B cell (primary cell): ENCODE measurements at regions of chr12 and their contacts with region 1.

Region 1: GRCh38 chr12:92259852-92260251 is 114.2 kb upstream of the BTG1 start:
- DNase-seq: no peak
- ATAC-seq: no peak
- H3K4me3 ChIP-seq: no peak overlapping the region
- H3K4me3 Mint-ChIP-seq: no peak overlapping the region
- H3K27ac ChIP-seq: no peak overlapping the region
- H3K27ac Mint-ChIP-seq: no peak overlapping the region
- H3K4me1 ChIP-seq: peaks cover 6 to 10% of the 10 kb centered on the region in 2 donors
- H3K4me1 Mint-ChIP-seq: peaks cover 27% of the 10 kb centered on the region
- H3K27me3 ChIP-seq: no peaks in the 10 kb centered on the region
- H3K27me3 Mint-ChIP-seq: no peaks in the 10 kb centered on the region
- CTCF ChIP-seq: no peak

Region 2: DNA sequence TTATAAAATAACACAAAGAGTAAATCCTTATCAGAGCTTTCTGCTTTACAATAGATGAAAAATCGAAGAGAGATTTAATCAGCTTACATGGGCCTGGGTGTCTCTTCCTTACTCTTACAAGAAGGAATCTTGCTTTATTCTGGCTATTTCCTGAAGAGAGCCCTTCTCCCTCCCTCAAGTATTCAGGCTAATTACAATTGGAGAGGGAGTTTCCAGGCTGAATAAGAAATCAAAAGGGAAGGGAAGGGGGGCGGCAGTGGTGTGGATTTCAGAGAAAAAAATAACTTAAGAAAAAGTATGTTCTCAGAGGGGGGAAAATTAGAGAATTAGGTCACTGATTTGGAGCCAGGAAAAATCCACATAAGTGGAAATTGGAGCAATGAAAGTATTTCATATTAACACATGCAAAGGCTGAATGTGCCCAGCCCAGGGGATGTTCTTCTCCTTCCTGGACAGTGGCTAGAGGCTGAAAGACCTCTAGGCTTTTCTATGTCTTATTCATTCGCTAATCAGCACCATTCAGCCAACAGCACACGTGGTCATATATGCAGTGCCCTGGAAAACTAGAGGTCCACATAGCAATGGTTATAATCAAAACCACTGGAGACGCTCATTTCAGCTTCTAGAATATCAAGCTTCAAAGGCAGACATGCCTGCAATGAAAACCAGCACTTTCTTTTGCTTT is 44.7 kb after region 1 on chr12:
- CTCF ChIA-PET with region 1: no interaction called
- POLR2A ChIA-PET with region 1: no interaction called
- intact Hi-C with region 1: loop called (anchors 5 kb)
- DNase-seq: no peak
- ATAC-seq: no peak
- H3K4me3 ChIP-seq: no peak overlapping the region
- H3K4me3 Mint-ChIP-seq: no peak overlapping the region
- H3K27ac ChIP-seq: no peak overlapping the region
- H3K27ac Mint-ChIP-seq: no peak overlapping the region
- H3K4me1 ChIP-seq: peaks cover 9% of the 10 kb centered on the region in 2 donors
- H3K4me1 Mint-ChIP-seq: peaks cover 10% of the 10 kb centered on the region
- H3K27me3 ChIP-seq: no peaks in the 10 kb centered on the region
- H3K27me3 Mint-ChIP-seq: no peaks in the 10 kb centered on the region
- CTCF ChIP-seq: no peak

Region 3: DNA sequence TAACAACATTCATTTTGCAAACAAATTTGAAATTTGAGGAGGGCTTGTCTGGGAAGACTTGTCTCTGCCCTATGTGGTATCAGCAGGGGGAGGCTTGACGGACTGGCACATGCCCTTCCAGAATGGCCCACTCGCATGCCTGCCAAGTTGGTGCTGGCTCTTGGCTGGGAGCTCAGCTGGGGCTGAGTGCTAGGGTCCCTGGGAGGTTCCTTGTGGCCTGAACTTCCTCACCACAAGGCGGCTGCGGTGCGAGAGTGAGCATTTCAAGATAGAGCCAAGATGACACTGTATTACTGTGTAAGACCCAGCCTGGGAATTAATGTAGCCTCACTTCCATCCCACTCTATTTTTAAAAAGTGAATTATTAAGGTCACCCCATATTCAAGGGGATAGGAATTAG is 171.3 kb after region 1 on chr12:
- CTCF ChIA-PET with region 1: no interaction called
- POLR2A ChIA-PET with region 1: no interaction called
- intact Hi-C with region 1: no loop called
- DNase-seq: peak; percentile 60
- ATAC-seq: peak; percentile 56
- H3K4me3 ChIP-seq: no peak overlapping the region
- H3K4me3 Mint-ChIP-seq: no peak overlapping the region
- H3K27ac ChIP-seq: no peak overlapping the region
- H3K27ac Mint-ChIP-seq: peak overlapping the region; percentile 71
- H3K4me1 ChIP-seq: peaks cover 52 to 55% of the 10 kb centered on the region in 2 donors
- H3K4me1 Mint-ChIP-seq: peaks cover 73% of the 10 kb centered on the region
- H3K27me3 ChIP-seq: no peaks in the 10 kb centered on the region
- H3K27me3 Mint-ChIP-seq: no peaks in the 10 kb centered on the region
- CTCF ChIP-seq: peak; percentile 32

Region 4: GRCh38 chr12:92462049-92462448 is 202.2 kb after region 1 on chr12:
- CTCF ChIA-PET with region 1: no interaction called
- POLR2A ChIA-PET with region 1: no interaction called
- intact Hi-C with region 1: no loop called
- DNase-seq: no peak
- ATAC-seq: peak; percentile 32
- H3K4me3 ChIP-seq: peak overlapping the region in 2 of 5 experiments; percentile 4 to 25
- H3K4me3 Mint-ChIP-seq: peak overlapping the region; percentile 66
- H3K27ac ChIP-seq: peak overlapping the region; percentile 85 to 93
- H3K27ac Mint-ChIP-seq: peak overlapping the region; percentile 92
- H3K4me1 ChIP-seq: peaks cover 69 to 84% of the 10 kb centered on the region in 2 donors
- H3K4me1 Mint-ChIP-seq: peaks cover 84% of the 10 kb centered on the region
- H3K27me3 ChIP-seq: no peaks in the 10 kb centered on the region
- H3K27me3 Mint-ChIP-seq: no peaks in the 10 kb centered on the region
- CTCF ChIP-seq: no peak

Region 5: GRCh38 chr12:92696216-92696615 is 436.4 kb after region 1 on chr12:
- CTCF ChIA-PET with region 1: no interaction called
- POLR2A ChIA-PET with region 1: no interaction called
- intact Hi-C with region 1: no loop called
- DNase-seq: no peak
- ATAC-seq: no peak
- H3K4me3 ChIP-seq: no peak overlapping the region
- H3K4me3 Mint-ChIP-seq: no peak overlapping the region
- H3K27ac ChIP-seq: no peak overlapping the region
- H3K27ac Mint-ChIP-seq: no peak overlapping the region
- H3K4me1 ChIP-seq: no peaks in the 10 kb centered on the region
- H3K4me1 Mint-ChIP-seq: peaks cover under 1% of the 10 kb centered on the region
- H3K27me3 ChIP-seq: no peaks in the 10 kb centered on the region
- H3K27me3 Mint-ChIP-seq: no peaks in the 10 kb centered on the region
- CTCF ChIP-seq: no peak